Caco-2 (cell line): ENCODE measurements at regions of chr3 and their contacts with region 1.

Region 1: DNA sequence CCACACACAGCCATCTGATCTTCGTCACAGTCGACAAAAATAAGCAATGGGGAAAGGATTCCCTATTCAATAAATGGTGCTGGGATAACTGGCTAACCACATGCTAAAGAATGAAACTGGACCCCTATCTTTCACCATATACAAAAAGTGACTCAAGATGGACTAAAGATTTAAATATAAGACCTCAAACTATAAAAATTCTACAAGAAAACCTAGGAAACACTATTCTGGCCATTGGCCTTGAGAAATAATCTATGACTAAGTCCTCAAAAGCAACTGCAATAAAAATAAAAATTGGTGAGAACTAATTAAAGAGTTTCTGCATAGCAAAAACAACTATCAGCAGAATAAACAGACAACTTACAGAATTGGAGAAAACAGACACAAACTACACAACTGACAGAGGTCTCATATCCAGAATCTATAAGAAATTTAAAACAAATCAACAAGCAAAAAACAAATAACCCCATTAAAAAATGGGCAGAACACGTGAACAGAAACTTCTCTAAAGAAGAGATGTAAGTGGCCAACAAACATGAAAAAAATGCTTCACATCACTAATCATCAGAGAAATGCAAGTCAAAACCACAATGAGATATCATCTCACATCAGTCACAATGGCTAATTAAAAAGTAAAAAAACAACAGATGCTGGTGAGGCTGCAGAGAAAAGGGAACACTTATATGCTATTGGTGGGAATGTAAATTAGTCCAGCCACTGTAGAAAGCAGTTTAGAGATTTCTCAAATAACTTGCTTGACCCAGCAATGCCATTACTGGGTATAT is 104.0 kb downstream of the NR1I2 start:
- DNase-seq: no peak
- H3K4me3 ChIP-seq: no peak overlapping the region
- H3K4me3 Mint-ChIP-seq: no peak overlapping the region
- H3K27ac Mint-ChIP-seq: no peak overlapping the region
- H3K4me1 ChIP-seq: no peaks in the 10 kb centered on the region
- H3K4me1 Mint-ChIP-seq: peaks cover 7% of the 10 kb centered on the region
- H3K27me3 ChIP-seq: no peaks in the 10 kb centered on the region
- H3K27me3 Mint-ChIP-seq: no peaks in the 10 kb centered on the region
- CTCF ChIP-seq: no peak

Region 2: GRCh38 chr3:119716998-119717397 is 168.9 kb before region 1 on chr3:
- CTCF ChIA-PET with region 1: no interaction called
- POLR2A ChIA-PET with region 1: no interaction called
- intact Hi-C with region 1: loop called (anchors 10 kb)
- DNase-seq: peak; percentile 52 to 69
- H3K4me3 ChIP-seq: no peak overlapping the region
- H3K4me3 Mint-ChIP-seq: no peak overlapping the region
- H3K27ac Mint-ChIP-seq: no peak overlapping the region
- H3K4me1 ChIP-seq: no peaks in the 10 kb centered on the region
- H3K4me1 Mint-ChIP-seq: peaks cover 6% of the 10 kb centered on the region
- H3K27me3 ChIP-seq: no peaks in the 10 kb centered on the region
- H3K27me3 Mint-ChIP-seq: peaks cover 2% of the 10 kb centered on the region
- CTCF ChIP-seq: peak in 1 of 2 experiments; percentile 6

Region 3: DNA sequence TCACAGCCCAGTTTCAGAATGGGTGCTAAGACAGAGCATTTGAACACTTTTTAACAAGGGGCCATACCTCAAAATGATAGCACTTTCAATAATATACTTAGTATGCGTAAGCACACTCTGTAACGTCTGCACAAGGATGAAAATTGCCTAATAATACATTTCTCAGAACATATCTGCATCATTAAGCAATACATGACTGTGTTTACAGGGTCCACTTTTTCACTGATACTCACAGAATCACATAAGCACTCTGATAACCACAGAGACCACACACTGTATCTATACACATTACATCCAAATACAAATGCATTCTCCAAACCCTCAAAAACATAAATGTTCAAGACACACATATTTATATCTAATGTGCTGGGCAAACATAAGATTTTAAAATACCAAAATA is 24.3 kb before region 1 on chr3:
- CTCF ChIA-PET with region 1: no interaction called
- POLR2A ChIA-PET with region 1: no interaction called
- intact Hi-C with region 1: no loop called
- DNase-seq: no peak
- H3K4me3 ChIP-seq: no peak overlapping the region
- H3K4me3 Mint-ChIP-seq: no peak overlapping the region
- H3K27ac Mint-ChIP-seq: no peak overlapping the region
- H3K4me1 ChIP-seq: no peaks in the 10 kb centered on the region
- H3K4me1 Mint-ChIP-seq: no peaks in the 10 kb centered on the region
- H3K27me3 ChIP-seq: no peaks in the 10 kb centered on the region
- H3K27me3 Mint-ChIP-seq: no peaks in the 10 kb centered on the region
- CTCF ChIP-seq: no peak